Gastrocnemius medialis (tissue), 4 donors: ENCODE measurements at regions of chr6 and their contacts with region 1.

Region 1: GRCh38 chr6:155158030-155158843 is 105.6 kb upstream of the CLDN20 start:
- DNase-seq: no peak
- ATAC-seq: peak; percentile 80 to 83
- H3K4me3 ChIP-seq: no peak overlapping the region
- H3K27ac ChIP-seq: peak overlapping the region; percentile 75 to 83 (median 81)
- H3K4me1 ChIP-seq: peaks cover 13 to 25% of the 10 kb centered on the region in 2 donors
- H3K27me3 ChIP-seq: no peaks in the 10 kb centered on the region
- CTCF ChIP-seq: no peak
- POLR2A ChIP-seq: no peak

Region 2: GRCh38 chr6:155024391-155025027 is 133.7 kb before region 1 on chr6:
- in situ Hi-C with region 1: no loop called
- intact Hi-C with region 1: loop called (anchors 5 kb)
- DNase-seq: peak in 1 of 2 donors; percentile 10
- ATAC-seq: no peak
- H3K4me3 ChIP-seq: no peak overlapping the region
- H3K27ac ChIP-seq: peak overlapping the region in 1 of 4 donors; percentile 28
- H3K4me1 ChIP-seq: peaks cover 7 to 15% of the 10 kb centered on the region in 2 donors
- H3K27me3 ChIP-seq: no peaks in the 10 kb centered on the region
- CTCF ChIP-seq: no peak
- POLR2A ChIP-seq: no peak

Region 3: DNA sequence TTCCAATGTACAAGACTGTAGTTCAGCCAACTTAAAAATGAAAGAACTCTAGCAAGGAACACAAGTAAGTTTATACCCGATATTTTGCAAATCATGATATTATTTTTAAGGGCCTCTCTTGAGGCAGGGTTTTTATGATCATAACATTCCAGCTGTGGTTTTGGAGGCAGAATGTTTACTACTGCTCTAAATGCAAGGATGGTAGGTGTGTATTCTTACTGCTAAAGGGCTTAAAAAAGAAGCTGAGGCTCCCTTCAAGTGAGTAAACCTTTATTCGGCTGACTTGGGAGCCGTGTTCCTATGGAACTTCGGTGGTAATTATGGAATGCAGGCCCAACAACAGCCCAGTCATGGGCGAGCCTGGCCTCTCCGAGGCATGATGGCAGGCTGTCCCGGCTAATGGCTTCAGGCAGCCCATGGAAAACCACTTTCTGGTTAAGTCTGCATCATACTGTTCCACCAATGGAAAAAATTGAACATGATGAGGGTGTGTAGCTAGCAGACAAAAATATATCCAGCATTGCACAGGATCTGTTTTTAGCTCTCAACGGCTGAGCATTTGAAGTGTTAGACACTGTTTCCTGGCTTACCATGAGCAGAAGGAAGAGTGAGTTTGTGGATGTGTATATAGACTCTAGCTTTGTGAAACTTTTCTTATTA is 51.7 kb before region 1 on chr6:
- in situ Hi-C with region 1: no loop called
- intact Hi-C with region 1: loop called (anchors 5 kb)
- DNase-seq: no peak
- ATAC-seq: peak; percentile 60 to 76
- H3K4me3 ChIP-seq: peak overlapping the region in 3 of 4 donors; percentile 38 to 44 (median 44)
- H3K27ac ChIP-seq: peak overlapping the region; percentile 11 to 72 (median 63)
- H3K4me1 ChIP-seq: peaks cover 4 to 8% of the 10 kb centered on the region in 2 donors
- H3K27me3 ChIP-seq: no peaks in the 10 kb centered on the region
- CTCF ChIP-seq: no peak
- POLR2A ChIP-seq: no peak